B cell (primary cell): ENCODE measurements at regions of chr6 and their contacts with region 1.

Region 1: DNA sequence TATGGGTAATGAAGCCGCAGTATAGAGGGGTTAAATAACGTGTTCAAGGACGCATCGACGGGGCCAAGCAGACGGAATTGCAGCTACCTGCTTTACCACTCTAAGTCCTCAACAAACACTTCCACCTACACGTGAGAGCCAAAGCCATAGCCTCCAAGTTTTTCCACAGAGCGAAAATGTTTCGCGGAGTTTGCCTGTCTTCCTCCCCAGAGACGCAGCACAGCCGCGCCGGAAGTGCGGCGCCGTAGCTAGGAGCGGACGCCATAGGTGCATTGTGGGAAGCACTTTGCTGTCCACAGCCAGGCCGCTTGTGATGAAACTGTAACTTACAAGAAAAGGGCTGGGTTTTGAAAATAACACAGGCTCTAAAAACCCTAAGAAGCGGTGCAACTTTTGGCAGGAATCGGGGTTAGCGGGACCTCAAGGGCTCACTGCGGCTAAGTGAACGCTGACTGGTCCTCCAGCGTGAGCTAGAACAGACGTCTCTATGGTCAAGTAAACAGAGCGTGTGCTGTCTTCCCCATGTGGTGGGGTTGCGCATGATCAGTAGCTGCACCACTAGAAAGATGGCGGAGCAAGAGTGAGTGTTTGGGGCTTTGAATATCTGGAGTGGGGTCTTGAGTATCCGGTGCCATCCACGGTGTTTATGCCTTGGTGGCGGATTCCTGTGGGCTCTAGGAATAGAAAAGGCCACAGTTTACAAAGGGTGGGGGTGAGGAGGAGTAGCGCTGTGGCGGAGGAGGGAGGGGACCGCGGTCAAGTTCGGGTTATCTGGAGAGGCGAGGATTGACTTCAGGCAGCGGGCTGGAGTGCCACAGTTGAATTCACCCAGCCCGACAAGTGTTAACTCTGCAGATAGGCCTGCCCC is at the start of gene RPL7L1:
- DNase-seq: peak; percentile 93
- ATAC-seq: peak; percentile 95
- H3K4me3 ChIP-seq: peak within 1 kb of the TSS; percentile 76 to 99 (median 90)
- H3K4me3 Mint-ChIP-seq: peak within 1 kb of the TSS; percentile 96
- H3K27ac ChIP-seq: peak within 1 kb of the TSS; percentile 85 to 87
- H3K27ac Mint-ChIP-seq: peak within 1 kb of the TSS; percentile 97
- H3K4me1 ChIP-seq: peaks cover 8 to 18% of the 10 kb centered on the region in 2 donors
- H3K4me1 Mint-ChIP-seq: peaks cover 21% of the 10 kb centered on the region
- H3K27me3 ChIP-seq: no peaks in the 10 kb centered on the region
- H3K27me3 Mint-ChIP-seq: no peaks in the 10 kb centered on the region
- CTCF ChIP-seq: no peak
- total RNA-seq, gene RPL7L1: 95.9 and 100 TPM in 2 replicates

Region 2: DNA sequence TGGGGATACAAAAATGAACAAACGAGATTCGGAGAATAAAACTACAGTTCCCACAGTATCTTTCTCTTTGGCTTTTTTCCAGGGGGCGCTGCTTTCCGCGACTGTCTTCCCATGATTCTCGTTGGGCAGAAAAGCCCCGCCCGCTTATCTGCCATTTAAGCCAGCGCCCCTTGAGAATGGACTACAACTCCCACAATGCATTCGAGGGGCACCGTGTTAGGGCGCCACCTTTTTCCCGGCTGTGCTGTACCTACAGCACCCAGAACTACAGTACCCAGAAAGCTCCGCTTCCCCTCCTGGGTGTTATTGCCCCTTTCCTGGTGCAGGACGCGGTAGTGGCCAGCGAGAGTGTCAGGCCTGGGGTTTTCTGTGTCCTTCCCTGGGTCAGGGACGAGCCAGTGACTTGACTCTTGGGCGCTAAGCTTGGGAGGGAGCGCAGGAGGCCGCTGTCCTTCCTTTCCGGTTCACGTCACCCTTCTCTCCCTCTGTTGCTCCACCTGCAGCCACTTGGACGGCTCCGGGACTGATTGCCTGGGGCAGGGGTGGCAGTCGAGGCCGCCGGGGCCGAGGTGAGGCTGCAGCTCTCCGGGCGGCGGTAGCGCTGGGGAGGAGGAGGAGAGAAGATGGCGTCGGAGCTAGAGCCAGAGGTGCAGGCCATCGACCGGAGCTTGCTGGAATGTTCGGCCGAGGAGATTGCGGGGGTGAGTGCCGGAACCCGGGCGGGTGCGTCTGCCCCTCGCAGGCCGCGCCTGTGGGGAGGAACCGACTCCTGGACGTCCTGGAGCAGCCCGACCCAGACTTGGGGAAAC is 315.7 kb before region 1 on chr6 and contains the start of gene UBR2:
- CTCF ChIA-PET with region 1: interaction called, 3 read pairs
- POLR2A ChIA-PET with region 1: no interaction called
- intact Hi-C with region 1: loop called (anchors 2 kb)
- DNase-seq: peak; percentile 95
- ATAC-seq: peak; percentile 96
- H3K4me3 ChIP-seq: peak within 1 kb of the TSS; percentile 78 to 98 (median 91)
- H3K4me3 Mint-ChIP-seq: peak within 1 kb of the TSS; percentile 98
- H3K27ac ChIP-seq: peak within 1 kb of the TSS; percentile 90 to 91
- H3K27ac Mint-ChIP-seq: peak within 1 kb of the TSS; percentile 98
- H3K4me1 ChIP-seq: peaks cover 19 to 25% of the 10 kb centered on the region in 2 donors
- H3K4me1 Mint-ChIP-seq: peaks cover 36% of the 10 kb centered on the region
- H3K27me3 ChIP-seq: no peaks in the 10 kb centered on the region
- H3K27me3 Mint-ChIP-seq: no peaks in the 10 kb centered on the region
- CTCF ChIP-seq: peak; percentile 41
- total RNA-seq, gene UBR2: 56.2 and 61.5 TPM in 2 replicates

Region 3: DNA sequence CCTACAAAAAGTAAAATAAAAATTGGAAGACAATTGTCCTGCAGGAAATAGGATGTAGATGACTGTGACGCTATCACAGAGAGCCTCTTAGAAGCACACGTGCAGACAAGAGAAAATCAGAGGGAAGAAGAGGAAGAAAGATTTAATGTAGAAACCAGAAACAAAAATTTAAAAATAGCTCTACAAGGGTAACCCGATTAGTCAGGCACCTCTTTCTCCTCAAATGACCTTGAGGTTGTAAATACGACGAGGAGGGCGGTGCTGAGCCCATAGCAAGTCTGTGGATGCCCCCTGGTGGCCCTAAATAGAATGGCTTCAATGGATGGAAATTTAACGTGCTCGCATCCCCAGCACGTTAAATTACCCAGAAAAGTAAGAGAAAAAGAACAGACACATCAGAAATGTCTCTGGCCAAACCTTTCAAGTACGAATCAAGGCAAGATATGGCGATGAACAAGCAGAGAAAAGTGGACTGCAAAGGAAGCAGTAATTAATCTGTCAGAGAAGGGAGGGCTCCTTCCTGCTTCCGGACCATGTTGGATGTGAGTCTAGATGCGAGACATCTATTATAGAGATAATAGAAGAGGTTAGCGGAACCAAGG is 153.0 kb before region 1 on chr6:
- CTCF ChIA-PET with region 1: interaction called, 11 read pairs
- POLR2A ChIA-PET with region 1: interaction called, 5 read pairs
- intact Hi-C with region 1: loop called (anchors 1 kb)
- DNase-seq: peak; percentile 92
- ATAC-seq: peak; percentile 99
- H3K4me3 ChIP-seq: peak overlapping the region; percentile 57 to 76 (median 68)
- H3K4me3 Mint-ChIP-seq: peak overlapping the region; percentile 92
- H3K27ac ChIP-seq: peak overlapping the region; percentile 59 to 64
- H3K27ac Mint-ChIP-seq: peak overlapping the region; percentile 94
- H3K4me1 ChIP-seq: peaks cover 12 to 17% of the 10 kb centered on the region in 2 donors
- H3K4me1 Mint-ChIP-seq: peaks cover 19% of the 10 kb centered on the region
- H3K27me3 ChIP-seq: no peaks in the 10 kb centered on the region
- H3K27me3 Mint-ChIP-seq: no peaks in the 10 kb centered on the region
- CTCF ChIP-seq: peak; percentile 94

Region 4: DNA sequence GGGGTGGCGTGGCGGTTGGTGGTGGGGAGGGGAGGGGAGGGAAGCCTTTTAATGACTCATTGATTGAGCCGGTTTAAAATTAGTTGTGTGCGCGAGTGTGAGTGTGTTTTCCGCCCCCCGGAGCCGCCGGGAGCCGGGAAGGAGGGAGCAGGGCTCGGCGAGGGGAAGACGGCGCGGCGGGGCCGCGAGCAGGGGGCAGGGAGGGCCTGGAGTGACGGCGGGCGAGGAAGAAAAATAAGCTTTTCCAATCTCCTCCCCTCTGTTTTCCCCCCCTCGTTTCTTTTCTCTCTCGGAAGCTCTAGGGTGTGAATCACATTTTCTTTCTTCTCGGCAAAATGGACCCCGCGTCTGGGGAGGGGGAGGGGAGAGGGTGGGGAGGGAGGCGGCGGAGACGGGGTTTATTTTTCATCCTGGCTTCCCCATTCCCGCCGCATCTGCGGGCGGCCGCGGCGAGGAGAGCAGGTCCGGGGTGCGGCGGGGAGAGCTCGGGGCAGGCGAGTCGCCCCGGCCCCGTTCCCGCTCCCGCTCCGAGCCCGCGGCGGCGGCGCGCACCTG is 96.9 kb before region 1 on chr6:
- CTCF ChIA-PET with region 1: interaction called, 10 read pairs
- POLR2A ChIA-PET with region 1: interaction called, 19 read pairs
- intact Hi-C with region 1: loop called (anchors 1 kb)
- DNase-seq: peak; percentile 88
- ATAC-seq: peak; percentile 48
- H3K4me3 ChIP-seq: peak overlapping the region; percentile 55 to 99 (median 96)
- H3K4me3 Mint-ChIP-seq: peak overlapping the region; percentile 93
- H3K27ac ChIP-seq: peak overlapping the region; percentile 99 to 100
- H3K27ac Mint-ChIP-seq: peak overlapping the region; percentile 100
- H3K4me1 ChIP-seq: peaks cover 54 to 57% of the 10 kb centered on the region in 2 donors
- H3K4me1 Mint-ChIP-seq: peaks cover 41% of the 10 kb centered on the region
- H3K27me3 ChIP-seq: no peaks in the 10 kb centered on the region
- H3K27me3 Mint-ChIP-seq: no peaks in the 10 kb centered on the region
- CTCF ChIP-seq: no peak

Region 5: GRCh38 chr6:42796171-42796570 is 83.4 kb before region 1 on chr6:
- CTCF ChIA-PET with region 1: no interaction called
- POLR2A ChIA-PET with region 1: no interaction called
- intact Hi-C with region 1: no loop called
- DNase-seq: no peak
- ATAC-seq: no peak
- H3K4me3 ChIP-seq: no peak overlapping the region
- H3K4me3 Mint-ChIP-seq: no peak overlapping the region
- H3K27ac ChIP-seq: no peak overlapping the region
- H3K27ac Mint-ChIP-seq: peak overlapping the region; percentile 11
- H3K4me1 ChIP-seq: peaks cover 0 to 3% of the 10 kb centered on the region in 2 donors
- H3K4me1 Mint-ChIP-seq: peaks cover 16% of the 10 kb centered on the region
- H3K27me3 ChIP-seq: no peaks in the 10 kb centered on the region
- H3K27me3 Mint-ChIP-seq: no peaks in the 10 kb centered on the region
- CTCF ChIP-seq: no peak

Region 6: DNA sequence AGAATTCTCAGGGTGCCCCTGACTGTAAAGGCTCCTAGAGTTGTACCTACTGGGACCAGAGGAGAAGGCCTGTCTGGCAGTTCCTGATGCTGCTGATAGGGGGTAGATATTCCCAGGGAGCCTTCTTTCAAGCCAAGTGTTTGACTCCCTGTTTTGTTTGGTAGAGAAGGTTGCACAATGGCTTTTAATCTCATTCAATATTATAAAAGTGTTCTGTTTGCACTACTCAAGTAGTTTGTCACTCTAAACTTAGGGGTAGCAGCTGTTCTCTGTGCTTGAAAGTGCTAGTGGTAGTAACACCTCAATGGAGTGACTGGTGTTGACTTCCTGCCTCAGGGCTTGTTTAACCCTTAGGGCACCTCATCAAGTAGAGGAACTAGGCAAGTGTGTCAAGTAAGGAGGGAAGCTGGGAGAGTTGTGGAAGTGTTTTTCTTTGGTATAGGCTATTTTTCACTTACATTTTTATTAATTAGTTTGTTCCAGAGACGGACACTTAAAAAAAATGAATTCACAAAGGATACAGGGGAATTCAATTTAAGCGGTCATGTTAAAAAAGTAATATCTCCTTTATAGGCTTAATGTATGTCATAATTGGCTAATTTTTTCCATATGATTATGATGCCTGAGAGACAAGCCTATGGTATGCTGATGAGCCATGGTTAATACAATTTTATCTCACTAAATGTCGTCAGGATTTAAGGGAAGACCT is 59.6 kb before region 1 on chr6:
- CTCF ChIA-PET with region 1: no interaction called
- POLR2A ChIA-PET with region 1: no interaction called
- intact Hi-C with region 1: no loop called
- DNase-seq: peak; percentile 30
- ATAC-seq: peak; percentile 41
- H3K4me3 ChIP-seq: no peak overlapping the region
- H3K4me3 Mint-ChIP-seq: no peak overlapping the region
- H3K27ac ChIP-seq: peak overlapping the region in 1 of 2 donors; percentile 55
- H3K27ac Mint-ChIP-seq: peak overlapping the region; percentile 81
- H3K4me1 ChIP-seq: peaks cover 6 to 19% of the 10 kb centered on the region in 2 donors
- H3K4me1 Mint-ChIP-seq: peaks cover 26% of the 10 kb centered on the region
- H3K27me3 ChIP-seq: no peaks in the 10 kb centered on the region
- H3K27me3 Mint-ChIP-seq: no peaks in the 10 kb centered on the region
- CTCF ChIP-seq: no peak

Region 7: DNA sequence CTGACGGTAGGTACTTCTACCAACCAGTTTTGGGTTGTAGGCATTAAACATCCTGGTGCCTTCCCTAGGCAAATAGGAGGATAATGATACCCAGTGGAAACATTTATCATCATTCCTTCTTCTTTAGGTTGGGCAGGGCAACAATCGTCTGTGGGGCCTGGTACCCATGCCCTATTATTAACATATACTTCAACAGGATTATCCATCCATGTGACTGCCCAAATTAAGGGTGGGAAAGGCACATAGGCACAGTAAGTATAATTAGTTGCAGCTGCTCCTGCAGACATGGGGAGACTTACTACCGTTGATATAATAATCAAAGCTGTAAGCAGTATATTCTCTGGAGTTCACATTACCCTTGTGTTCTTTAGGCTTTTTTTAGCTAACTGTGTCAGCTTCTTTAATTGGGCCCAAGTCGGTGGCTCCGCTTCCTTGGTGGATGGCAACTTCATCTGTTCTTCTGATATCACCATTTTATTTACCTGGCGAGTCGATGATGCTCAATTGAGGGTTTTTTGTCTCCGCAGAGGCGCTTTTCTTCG is 16.6 kb after region 1 on chr6:
- CTCF ChIA-PET with region 1: interaction called, 35 read pairs
- POLR2A ChIA-PET with region 1: interaction called, 3 read pairs
- intact Hi-C with region 1: loop called (anchors 1 kb)
- DNase-seq: no peak
- ATAC-seq: no peak
- H3K4me3 ChIP-seq: no peak overlapping the region
- H3K4me3 Mint-ChIP-seq: no peak overlapping the region
- H3K27ac ChIP-seq: no peak overlapping the region
- H3K27ac Mint-ChIP-seq: no peak overlapping the region
- H3K4me1 ChIP-seq: peaks cover 17 to 24% of the 10 kb centered on the region in 2 donors
- H3K4me1 Mint-ChIP-seq: peaks cover 23% of the 10 kb centered on the region
- H3K27me3 ChIP-seq: no peaks in the 10 kb centered on the region
- H3K27me3 Mint-ChIP-seq: no peaks in the 10 kb centered on the region
- CTCF ChIP-seq: no peak